ENCODE measurements at regions of chr11 and their contacts with region 1.

Region 1: DNA sequence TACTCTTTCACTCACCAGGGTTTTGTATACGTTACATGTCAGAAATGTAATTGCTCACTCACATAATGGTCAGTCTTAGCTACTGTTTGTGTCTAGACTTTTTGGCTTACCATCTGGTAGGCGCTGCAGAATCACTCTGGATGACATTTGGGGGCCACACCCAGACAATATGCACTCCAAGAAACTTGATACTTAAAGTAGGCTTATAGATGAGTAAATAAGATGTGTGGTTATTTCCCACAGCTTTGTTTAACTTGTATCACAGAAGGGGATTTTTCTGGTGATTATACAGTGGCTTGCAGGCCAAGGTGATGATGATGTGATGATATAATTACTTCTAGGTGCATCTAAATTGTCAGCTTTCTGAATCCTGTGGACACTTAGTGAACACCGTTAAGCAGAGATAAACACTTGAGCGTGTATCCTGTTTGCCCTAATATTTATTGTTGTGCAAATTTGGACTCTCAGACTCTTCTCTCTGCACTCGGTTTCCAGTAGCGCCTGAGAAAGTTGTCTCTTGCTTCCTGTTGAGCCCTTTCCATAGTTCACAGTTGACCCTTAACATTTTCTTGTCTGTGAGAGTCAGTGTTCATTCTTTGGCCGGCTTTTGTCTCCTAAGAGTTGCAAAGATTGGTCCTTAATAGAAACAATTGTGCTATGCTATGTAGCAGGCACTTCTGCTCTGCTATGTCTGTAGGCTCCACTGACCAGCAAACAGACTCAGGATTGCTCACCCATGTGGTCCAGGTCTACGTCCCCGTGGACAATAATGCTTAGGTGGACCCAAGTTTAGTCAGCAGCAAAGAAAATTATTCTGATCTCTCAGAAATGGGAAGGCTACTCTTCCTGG is 89.3 kb downstream of the PRR5L start:
- DNase-seq: peak; percentile 72
- H3K4me3 ChIP-seq: no peak overlapping the region
- H3K27ac ChIP-seq: no peak overlapping the region
- H3K27me3 ChIP-seq: no peaks in the 10 kb centered on the region
- CTCF ChIP-seq: no peak

Region 2: GRCh38 chr11:36421546-36422155 is 36.3 kb after region 1 on chr11:
- CTCF ChIA-PET with region 1: no interaction called
- POLR2A ChIA-PET with region 1: interaction called, 10 read pairs
- DNase-seq: no peak
- H3K4me3 ChIP-seq: no peak overlapping the region
- H3K27ac ChIP-seq: no peak overlapping the region
- H3K27me3 ChIP-seq: no peaks in the 10 kb centered on the region
- CTCF ChIP-seq: no peak

Measured in AG04450 (cell line).